ENCODE measurements at regions of chr1 and their contacts with region 1.

Region 1: GRCh38 chr1:235075188-235075926 is 53.3 kb downstream of the TOMM20 start:
- DNase-seq: peak; percentile 83 to 88
- ATAC-seq: peak; percentile 28 to 62 (median 52)
- H3K4me3 ChIP-seq: peak overlapping the region; percentile 4
- H3K27ac ChIP-seq: peak overlapping the region; percentile 96
- H3K4me1 ChIP-seq: peaks cover 72% of the 10 kb centered on the region
- H3K27me3 ChIP-seq: no peaks in the 10 kb centered on the region
- CTCF ChIP-seq: no peak

Region 2: DNA sequence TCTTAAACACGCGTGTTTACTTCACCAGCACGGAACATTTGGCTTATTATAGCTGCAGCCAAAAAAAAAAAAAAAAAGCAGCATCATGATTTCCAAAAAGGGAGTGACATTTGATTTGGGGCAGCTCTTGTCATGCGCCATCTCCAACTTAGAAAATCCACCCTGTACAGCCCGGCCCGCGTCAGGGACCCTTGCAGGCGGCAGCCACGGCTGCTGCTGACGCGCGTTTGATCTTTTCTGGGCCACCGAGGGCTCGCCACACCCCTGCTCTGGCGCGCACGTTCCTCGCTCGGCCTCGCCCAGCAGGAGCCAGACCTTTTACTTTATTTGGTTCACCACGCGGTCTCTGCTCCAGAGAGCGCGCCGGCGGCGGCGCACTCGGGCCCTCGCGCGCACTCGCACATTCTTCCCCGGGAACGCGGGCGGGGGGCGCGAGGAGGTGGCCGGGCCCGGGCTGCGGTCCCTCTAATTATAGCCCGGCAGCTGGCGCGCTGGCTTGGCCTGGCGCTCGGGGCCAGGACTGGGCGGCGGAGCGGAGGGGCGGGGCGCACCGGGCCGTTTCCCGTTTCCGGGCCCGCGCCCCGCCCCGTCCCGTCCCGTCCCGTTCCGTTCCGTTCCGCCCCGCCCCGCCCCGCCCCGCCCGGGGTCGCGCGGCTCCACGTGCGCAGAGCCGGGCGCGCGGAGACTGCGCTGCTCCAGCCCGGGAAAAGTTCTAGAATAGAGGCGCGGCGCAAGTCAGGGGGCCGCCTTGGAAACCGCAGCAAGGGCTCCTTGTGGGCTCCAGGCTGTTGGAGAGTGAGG is 475.5 kb before region 1 on chr1:
- intact Hi-C with region 1: loop called in 1 of 2 experiments (anchors 5 kb)
- DNase-seq: peak; percentile 91 to 96
- ATAC-seq: peak; percentile 85 to 93 (median 88)
- H3K4me3 ChIP-seq: peak overlapping the region; percentile 67
- H3K27ac ChIP-seq: peak overlapping the region; percentile 99
- H3K4me1 ChIP-seq: peaks cover 49% of the 10 kb centered on the region
- H3K27me3 ChIP-seq: no peaks in the 10 kb centered on the region
- CTCF ChIP-seq: no peak

Region 3: GRCh38 chr1:234722904-234723720 is 352.2 kb before region 1 on chr1:
- intact Hi-C with region 1: loop called (anchors 5 to 10 kb)
- DNase-seq: peak; percentile 78 to 82
- ATAC-seq: peak; percentile 27 to 50 (median 30)
- H3K4me3 ChIP-seq: peak overlapping the region; percentile 44
- H3K27ac ChIP-seq: peak overlapping the region; percentile 94
- H3K4me1 ChIP-seq: peaks cover 84% of the 10 kb centered on the region
- H3K27me3 ChIP-seq: no peaks in the 10 kb centered on the region
- CTCF ChIP-seq: no peak

Region 4: DNA sequence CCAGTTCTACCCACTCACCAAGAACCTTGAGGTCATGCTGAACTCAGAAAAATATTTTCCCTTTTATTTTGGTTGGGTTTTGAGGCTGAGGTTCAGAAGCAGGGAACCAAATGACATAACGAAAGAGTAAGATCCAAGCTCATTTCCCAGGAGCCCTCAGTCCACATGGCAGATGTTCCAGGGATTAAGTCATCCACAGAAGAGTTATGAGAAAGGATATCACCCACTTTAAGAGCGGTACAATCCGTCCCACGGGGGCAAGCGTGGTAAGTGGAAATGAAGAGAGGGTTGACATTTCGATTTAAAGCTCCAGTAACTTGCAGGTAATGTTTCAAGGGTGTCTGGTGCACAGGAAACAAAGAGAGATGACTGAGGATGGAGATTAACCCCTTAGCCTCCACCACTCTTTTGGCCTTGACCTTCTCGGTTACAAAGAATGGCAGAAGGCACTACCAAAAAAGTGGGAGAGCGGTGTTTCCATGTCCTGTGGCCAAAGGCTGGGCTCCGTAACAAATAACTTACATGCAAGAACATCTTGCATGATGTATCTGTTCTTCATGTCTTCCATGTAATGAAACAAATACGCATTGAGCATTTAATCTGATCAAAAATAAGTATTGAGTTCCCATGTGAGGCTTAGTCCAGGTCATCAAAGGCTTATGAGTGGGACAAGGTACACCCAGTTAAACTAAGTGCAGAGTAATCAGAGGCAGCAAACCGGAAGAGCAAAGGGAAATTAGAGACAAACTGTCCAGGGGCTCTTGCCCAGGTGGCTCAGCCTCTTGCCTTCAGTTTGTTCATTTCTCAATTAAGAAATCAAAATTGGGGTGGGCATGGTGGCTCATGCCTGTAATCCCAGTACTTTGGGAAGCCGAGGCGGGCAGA is 188.1 kb before region 1 on chr1:
- intact Hi-C with region 1: loop called in 1 of 2 experiments (anchors 5 kb)
- DNase-seq: peak; percentile 50 to 81
- ATAC-seq: peak; percentile 56 to 69 (median 66)
- H3K4me3 ChIP-seq: peak overlapping the region; percentile 41
- H3K27ac ChIP-seq: peak overlapping the region; percentile 97
- H3K4me1 ChIP-seq: peaks cover 30% of the 10 kb centered on the region
- H3K27me3 ChIP-seq: no peaks in the 10 kb centered on the region
- CTCF ChIP-seq: no peak

Region 5: GRCh38 chr1:234970731-234971476 is 104.5 kb before region 1 on chr1:
- intact Hi-C with region 1: loop called in 1 of 2 experiments (anchors 5 kb)
- DNase-seq: peak; percentile 86 to 93
- ATAC-seq: peak; percentile 83 to 92 (median 86)
- H3K4me3 ChIP-seq: peak overlapping the region; percentile 59
- H3K27ac ChIP-seq: peak overlapping the region; percentile 94
- H3K4me1 ChIP-seq: peaks cover 55% of the 10 kb centered on the region
- H3K27me3 ChIP-seq: no peaks in the 10 kb centered on the region
- CTCF ChIP-seq: no peak

Region 6: DNA sequence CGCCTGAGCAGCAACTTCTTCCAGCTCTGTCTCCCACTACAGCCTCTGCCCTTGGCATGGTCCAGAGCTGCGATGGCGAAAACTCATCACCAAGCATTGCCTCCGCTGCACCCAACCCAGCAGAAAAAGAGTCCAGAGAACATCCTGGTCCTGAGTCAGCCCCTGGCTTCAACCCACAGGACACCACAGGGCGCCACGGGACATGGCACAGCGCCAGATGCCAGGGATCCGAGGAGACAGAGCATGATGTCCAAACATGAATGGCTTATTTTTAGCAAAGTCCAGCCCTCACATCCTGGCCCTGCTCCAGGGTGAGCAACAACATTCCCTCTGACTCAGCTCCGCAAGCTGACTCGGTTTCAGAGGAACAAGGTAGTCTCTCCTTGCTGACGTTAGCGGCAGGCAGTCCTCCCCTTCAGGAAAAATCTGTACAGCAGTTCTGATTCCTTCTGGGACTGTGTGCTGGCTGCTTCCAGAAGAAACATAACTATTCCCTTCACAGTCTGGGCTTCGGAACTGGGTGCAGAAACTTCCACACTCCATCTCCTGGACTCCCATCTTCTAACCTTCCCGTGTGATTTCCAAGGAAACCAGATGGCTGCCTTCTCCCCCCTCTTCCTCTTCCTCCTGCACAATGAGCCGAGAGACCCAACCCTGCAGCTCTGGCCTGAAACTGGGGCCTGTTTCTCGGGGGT is 78.0 kb before region 1 on chr1:
- intact Hi-C with region 1: loop called (anchors 2 to 5 kb)
- DNase-seq: peak; percentile 100
- ATAC-seq: peak; percentile 90 to 95 (median 92)
- H3K4me3 ChIP-seq: peak overlapping the region; percentile 42
- H3K27ac ChIP-seq: peak overlapping the region; percentile 98
- H3K4me1 ChIP-seq: peaks cover 32% of the 10 kb centered on the region
- H3K27me3 ChIP-seq: no peaks in the 10 kb centered on the region
- CTCF ChIP-seq: no peak

Region 7: DNA sequence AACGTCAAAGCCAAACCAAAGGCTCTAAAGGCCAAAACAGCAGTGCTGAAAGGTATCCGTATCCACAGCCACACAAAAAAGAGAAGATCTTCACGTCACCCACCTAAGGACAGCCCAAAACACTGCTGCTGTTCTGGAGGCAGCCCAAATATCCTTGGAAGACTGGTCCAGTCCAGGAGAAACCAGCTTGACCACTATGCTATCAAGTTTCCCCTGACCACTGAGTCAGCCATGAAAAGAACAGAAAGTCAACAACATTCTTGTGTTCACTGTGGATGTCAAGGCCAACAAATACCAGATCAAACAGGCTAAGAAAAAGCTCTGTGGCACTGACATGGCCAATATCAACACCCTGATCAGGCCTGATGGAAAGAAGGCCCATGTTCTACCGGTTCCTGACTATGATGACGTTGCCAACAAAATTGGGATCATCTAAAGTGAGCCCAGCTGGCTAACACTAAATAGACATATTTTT is 220.6 kb after region 1 on chr1:
- intact Hi-C with region 1: no loop called
- DNase-seq: no peak
- ATAC-seq: peak; percentile 64 to 75 (median 68)
- H3K4me3 ChIP-seq: no peak overlapping the region
- H3K27ac ChIP-seq: peak overlapping the region; percentile 4
- H3K4me1 ChIP-seq: peaks cover 41% of the 10 kb centered on the region
- H3K27me3 ChIP-seq: no peaks in the 10 kb centered on the region
- CTCF ChIP-seq: no peak

Region 8: DNA sequence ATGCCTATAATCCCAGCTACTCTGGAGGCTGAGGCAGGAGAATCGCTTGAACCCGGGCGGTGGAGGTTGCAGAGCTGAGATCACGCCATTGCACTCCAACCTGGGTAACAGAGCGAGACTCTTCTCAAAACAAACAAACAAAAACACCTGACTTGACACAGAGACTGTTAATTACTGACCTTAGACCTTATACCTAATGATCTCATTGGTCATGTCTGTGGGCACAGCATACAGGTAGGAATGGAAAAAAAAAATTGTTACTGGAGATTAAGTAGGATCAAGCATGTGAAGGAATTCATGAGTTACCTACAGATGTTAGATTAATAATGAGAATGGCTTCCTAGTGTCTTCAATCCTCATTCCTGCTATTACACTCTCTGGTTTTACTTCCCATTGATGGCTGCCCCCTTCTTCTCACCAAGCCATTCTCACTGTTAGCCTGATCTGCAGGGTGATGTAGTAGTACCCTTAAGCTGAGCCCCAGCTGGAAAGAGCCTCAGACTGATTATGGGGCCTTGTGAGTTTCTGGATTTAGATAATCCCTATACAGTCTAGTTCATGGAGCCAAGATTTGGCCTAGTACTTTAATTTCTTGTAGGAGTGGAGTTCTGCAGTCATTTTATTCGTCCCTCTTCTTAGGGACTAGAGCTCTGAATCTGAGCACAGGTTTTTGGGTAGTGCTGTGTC is 300.7 kb after region 1 on chr1:
- intact Hi-C with region 1: no loop called
- DNase-seq: no peak
- ATAC-seq: no peak
- H3K4me3 ChIP-seq: no peak overlapping the region
- H3K27ac ChIP-seq: no peak overlapping the region
- H3K4me1 ChIP-seq: no peaks in the 10 kb centered on the region
- H3K27me3 ChIP-seq: no peaks in the 10 kb centered on the region
- CTCF ChIP-seq: no peak

Measured in psoas muscle (tissue), 8 donors.